Sigmoid colon (tissue), 7 donors: ENCODE measurements at regions of chr3 and their contacts with region 1.

Region 1: GRCh38 chr3:73727117-73727821 is 102.5 kb upstream of the PDZRN3 start:
- DNase-seq: peak; percentile 82
- H3K4me3 ChIP-seq: no peak overlapping the region
- H3K27ac ChIP-seq: peak overlapping the region; percentile 50 to 85 (median 76)
- H3K4me1 ChIP-seq: peaks cover 0 to 26% (median 19%) of the 10 kb centered on the region in 4 donors
- H3K27me3 ChIP-seq: no peaks in the 10 kb centered on the region
- CTCF ChIP-seq: no peak
- EP300 ChIP-seq: peak; percentile 14 to 47 (median 32)
- POLR2A ChIP-seq: no peak

Region 2: GRCh38 chr3:73422571-73422970 is 304.7 kb before region 1 on chr3:
- intact Hi-C with region 1: loop called (anchors 5 kb)
- DNase-seq: no peak
- H3K4me3 ChIP-seq: peak overlapping the region in 1 of 4 donors; percentile 8
- H3K27ac ChIP-seq: peak overlapping the region; percentile 70 to 81 (median 78)
- H3K4me1 ChIP-seq: peaks cover 0 to 88% (median 75%) of the 10 kb centered on the region in 4 donors
- H3K27me3 ChIP-seq: no peaks in the 10 kb centered on the region
- CTCF ChIP-seq: no peak
- EP300 ChIP-seq: peak; percentile 80 to 94 (median 90)
- POLR2A ChIP-seq: no peak

Region 3: GRCh38 chr3:73508330-73508954 is 218.8 kb before region 1 on chr3:
- intact Hi-C with region 1: loop called (anchors 5 kb)
- DNase-seq: no peak
- H3K4me3 ChIP-seq: no peak overlapping the region
- H3K27ac ChIP-seq: peak overlapping the region; percentile 85 to 90 (median 86)
- H3K4me1 ChIP-seq: peaks cover 0 to 93% (median 75%) of the 10 kb centered on the region in 4 donors
- H3K27me3 ChIP-seq: no peaks in the 10 kb centered on the region
- CTCF ChIP-seq: peak in 3 of 4 experiments; percentile 69 to 79 (median 70)
- EP300 ChIP-seq: no peak
- POLR2A ChIP-seq: no peak